RWPE1 (cell line): ENCODE measurements at regions of chr1 and their contacts with region 1.

Region 1: GRCh38 chr1:1906185-1907097 is 8.6 kb upstream of the CALML6 start:
- DNase-seq: peak; percentile 78
- H3K27ac ChIP-seq: peak overlapping the region; percentile 91
- CTCF ChIP-seq: peak; percentile 93

Region 2: GRCh38 chr1:1665800-1666251 is 240.6 kb before region 1 on chr1:
- CTCF ChIA-PET with region 1: no interaction called
- POLR2A ChIA-PET with region 1: no interaction called
- DNase-seq: no peak
- H3K27ac ChIP-seq: no peak overlapping the region
- CTCF ChIP-seq: peak; percentile 48

Region 3: GRCh38 chr1:1894354-1895059 is 11.9 kb before region 1 on chr1:
- CTCF ChIA-PET with region 1: interaction called, 18 read pairs
- POLR2A ChIA-PET with region 1: interaction called, 3 read pairs
- DNase-seq: no peak
- H3K27ac ChIP-seq: peak overlapping the region; percentile 93
- CTCF ChIP-seq: no peak